ENCODE measurements at regions of chr6 and their contacts with region 1.

Region 1: DNA sequence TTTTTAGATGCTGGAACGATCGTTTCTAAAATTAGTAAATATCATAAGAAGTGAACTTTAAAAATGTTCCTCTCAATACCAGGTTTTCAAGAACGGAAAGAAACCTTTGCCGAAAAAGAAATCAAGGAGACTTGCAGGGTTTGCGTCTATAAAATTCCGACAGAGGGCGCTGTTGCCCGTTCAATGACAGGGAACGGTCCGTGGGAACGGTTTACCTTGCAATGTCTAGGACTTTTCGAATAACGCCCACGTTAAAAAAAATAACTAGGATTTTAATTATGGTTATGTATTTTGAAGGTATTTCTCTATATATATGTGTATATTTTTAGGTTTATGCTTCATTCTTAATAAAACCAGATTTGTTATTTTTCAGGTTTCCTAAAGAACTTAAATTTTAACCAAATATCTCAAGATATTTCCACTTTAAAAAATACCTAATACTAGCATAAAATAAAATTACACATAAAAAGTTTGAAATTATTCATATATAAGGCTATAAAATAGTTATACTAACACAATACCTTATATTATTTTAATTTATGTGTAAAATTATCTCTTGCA is 2.5 kb upstream of the TFAP2B start:
- DNase-seq: no peak
- H3K4me3 ChIP-seq: peak overlapping the region; percentile 40 to 58 (median 55)
- H3K27ac ChIP-seq: peak overlapping the region in 3 of 4 donors; percentile 68 to 96 (median 89)
- H3K4me1 ChIP-seq: peaks cover 3 to 55% (median 12%) of the 10 kb centered on the region in 3 donors
- H3K27me3 ChIP-seq: peaks cover 0 to 68% (median 6%) of the 10 kb centered on the region in 4 donors
- CTCF ChIP-seq: peak; percentile 45 to 93 (median 85)
- POLR2A ChIP-seq: no peak

Region 2: GRCh38 chr6:51541847-51542246 is 725.7 kb after region 1 on chr6:
- intact Hi-C with region 1: loop called (anchors 5 kb)
- DNase-seq: no peak
- H3K4me3 ChIP-seq: no peak overlapping the region
- H3K27ac ChIP-seq: no peak overlapping the region
- H3K4me1 ChIP-seq: peaks cover 0 to 7% (median 0%) of the 10 kb centered on the region in 3 donors
- H3K27me3 ChIP-seq: peaks cover 0 to 2% (median 0%) of the 10 kb centered on the region in 4 donors
- CTCF ChIP-seq: peak in 3 of 6 experiments; percentile 17 to 48 (median 35)
- POLR2A ChIP-seq: no peak

Region 3: DNA sequence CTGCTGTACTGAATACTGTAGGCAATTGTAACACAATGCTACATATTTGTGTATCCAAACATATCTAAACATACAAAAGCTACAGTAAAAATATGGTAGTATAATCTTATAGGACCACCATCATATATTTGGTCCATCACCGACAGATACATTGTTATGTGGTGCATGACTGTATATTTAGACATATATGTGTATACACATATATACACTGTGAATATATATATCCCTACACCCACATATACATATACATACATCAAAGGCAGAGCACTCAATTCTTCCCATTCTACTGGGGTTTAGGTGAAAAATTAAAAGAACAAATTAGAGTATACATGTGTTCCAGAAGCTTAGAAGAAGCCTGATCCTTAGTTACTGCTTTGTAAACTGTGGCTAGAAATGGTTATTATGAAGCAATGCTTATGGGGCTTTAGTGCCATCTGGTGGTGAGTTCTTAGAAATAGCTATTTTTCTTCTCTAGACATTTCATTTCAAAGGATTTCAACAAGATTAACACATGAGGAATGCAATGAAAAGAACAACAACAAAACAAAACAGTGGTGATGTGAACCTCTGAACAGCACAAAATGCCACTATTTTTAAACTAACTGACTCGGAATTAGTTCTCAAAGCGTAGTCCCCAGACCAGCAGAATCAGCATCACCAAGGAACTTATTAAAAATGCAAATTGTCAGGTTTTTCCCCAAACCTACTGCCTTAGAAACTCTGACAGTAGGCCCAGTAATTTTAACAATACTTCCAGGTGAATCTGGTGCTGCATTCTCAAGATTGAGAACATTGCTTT is 1233.3 kb after region 1 on chr6:
- intact Hi-C with region 1: loop called (anchors 10 kb)
- DNase-seq: no peak
- H3K4me3 ChIP-seq: no peak overlapping the region
- H3K27ac ChIP-seq: no peak overlapping the region
- H3K4me1 ChIP-seq: no peaks in the 10 kb centered on the region
- H3K27me3 ChIP-seq: peaks cover 0 to 10% (median 0%) of the 10 kb centered on the region in 4 donors
- CTCF ChIP-seq: peak; percentile 18 to 65 (median 39)
- POLR2A ChIP-seq: no peak